ENCODE measurements at regions of chr14 and their contacts with region 1.

Region 1: DNA sequence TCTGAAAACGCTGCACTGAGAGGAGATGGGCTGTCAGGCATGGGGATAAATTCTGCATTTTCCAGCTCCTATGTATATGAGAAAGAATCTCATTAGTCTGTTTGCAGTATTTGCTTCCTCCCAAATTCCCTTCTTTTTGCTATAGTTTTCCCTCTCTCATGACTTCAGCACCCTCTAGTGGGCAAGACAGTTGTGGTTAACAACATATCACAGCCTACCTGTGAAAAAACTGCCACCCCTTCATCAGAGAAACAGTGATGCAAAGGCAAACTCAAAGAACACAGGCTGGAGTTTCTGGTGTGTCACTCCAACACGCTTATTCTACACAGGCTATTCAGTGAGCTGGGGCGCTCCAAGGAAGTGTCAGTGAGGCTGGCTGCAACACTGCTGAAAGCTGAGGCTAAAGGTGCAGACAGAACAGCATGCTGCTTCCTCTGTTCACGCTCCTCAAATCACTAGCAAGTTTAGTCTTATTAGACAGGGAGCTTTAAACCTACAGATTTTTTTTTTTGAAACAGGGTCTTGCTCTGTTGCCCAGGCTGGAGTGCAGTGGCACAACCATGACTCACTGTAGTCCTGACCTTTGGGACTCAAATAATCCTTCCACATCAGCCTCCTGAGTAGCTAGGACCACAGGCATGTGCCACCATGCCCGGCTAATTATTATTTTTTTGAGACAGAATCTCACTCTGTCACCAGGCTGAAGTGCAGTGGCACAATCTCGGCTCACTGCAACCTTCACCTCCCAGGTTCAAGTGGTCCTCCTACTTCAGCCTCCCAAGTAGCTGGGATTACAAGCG is 19.3 kb downstream of the ZC2HC1C start:
- DNase-seq: peak; percentile 80

Region 2: DNA sequence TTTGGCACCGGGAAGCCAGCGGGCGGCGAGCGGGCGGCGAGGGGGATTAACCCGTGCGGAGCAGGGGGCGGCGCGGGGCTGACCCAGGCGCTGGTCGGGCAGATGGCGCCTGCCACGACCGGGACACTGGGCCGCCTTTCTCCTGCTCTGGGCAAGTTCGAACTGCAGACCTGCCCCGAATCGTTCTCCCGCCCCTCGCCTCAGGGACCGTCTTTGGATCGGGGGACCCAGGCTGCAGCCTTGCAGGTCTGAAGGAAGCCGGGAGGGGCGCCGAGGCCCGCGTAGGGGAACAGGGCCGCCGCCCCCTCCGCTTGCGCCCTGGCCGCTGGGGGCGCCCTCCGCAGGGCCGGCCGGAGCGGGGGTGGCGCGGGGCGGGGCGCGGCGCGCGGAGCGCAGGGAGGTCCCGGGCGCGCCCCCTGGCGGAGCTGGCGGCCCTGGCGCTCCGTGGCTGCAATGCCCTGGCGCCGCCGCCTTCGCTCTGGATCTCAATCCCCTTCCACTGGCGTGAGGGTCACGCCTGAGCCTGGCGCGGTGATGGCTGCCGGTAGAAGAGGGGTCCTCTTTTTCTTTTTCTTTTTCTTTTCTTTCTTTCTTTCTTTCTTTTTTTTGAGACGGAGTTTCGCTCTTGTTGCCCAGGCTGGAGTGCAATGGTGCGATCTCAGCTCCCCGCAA is 476.3 kb before region 1 on chr14:
- in situ Hi-C with region 1: loop called (anchors 25 kb)
- DNase-seq: peak; percentile 81

Region 3: DNA sequence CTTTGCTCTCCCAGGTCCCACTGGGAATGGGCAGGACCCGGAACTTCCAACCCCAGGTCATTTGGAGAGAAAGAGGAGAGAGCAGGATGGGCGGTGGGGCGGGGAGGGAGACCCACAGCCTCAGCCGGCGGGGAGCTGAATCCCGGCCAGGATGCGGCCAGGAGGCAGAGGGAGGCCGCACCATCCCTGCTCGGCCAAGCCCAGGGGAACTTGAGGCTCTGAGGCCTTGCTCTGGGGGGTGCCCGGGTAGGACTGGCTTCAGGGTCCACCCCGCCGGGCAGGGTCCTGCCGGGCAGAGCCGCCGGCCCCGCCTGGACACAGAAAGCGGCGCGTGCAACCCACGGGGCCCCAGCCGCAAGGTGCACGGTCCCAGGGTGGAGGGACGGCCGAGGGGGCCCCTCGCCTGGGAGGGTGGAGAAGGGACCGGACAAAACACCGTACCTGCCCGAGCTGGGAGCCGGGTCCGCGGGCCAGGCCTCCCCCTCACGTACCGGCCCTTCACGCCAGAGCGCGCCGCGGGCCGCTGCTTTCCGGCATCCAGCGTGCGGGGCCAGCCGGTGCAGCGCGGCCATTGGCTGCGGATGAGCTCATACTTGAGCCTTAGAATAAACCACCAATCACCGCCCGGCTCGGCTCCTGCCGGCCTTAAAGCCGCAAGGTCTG is 165.9 kb before region 1 on chr14 and contains the start of gene RPS6KL1:
- in situ Hi-C with region 1: loop called (anchors 25 kb)
- DNase-seq: peak; percentile 76

Region 4: GRCh38 chr14:74988131-74988530 is 100.6 kb before region 1 on chr14:
- in situ Hi-C with region 1: no loop called
- DNase-seq: no peak

Measured in KBM-7 (cell line).